A673 (cell line): ENCODE measurements at regions of chr1 and their contacts with region 1.

Region 1: GRCh38 chr1:210292231-210292871 is 36.4 kb upstream of the HHAT start:
- DNase-seq: no peak
- H3K4me3 ChIP-seq: peak overlapping the region; percentile 47
- H3K27ac ChIP-seq: peak overlapping the region; percentile 94
- H3K4me1 ChIP-seq: peaks cover 58% of the 10 kb centered on the region
- H3K27me3 ChIP-seq: no peaks in the 10 kb centered on the region
- CTCF ChIP-seq: peak; percentile 38

Region 2: GRCh38 chr1:210200124-210200736 is 92.1 kb before region 1 on chr1:
- CTCF ChIA-PET with region 1: interaction called, 26 read pairs
- POLR2A ChIA-PET with region 1: interaction called, 3 read pairs
- intact Hi-C with region 1: no loop called
- DNase-seq: peak; percentile 33
- H3K4me3 ChIP-seq: no peak overlapping the region
- H3K27ac ChIP-seq: no peak overlapping the region
- H3K4me1 ChIP-seq: peaks cover 19% of the 10 kb centered on the region
- H3K27me3 ChIP-seq: peaks cover 30% of the 10 kb centered on the region
- CTCF ChIP-seq: peak; percentile 34; the same call in 1 of the 2 replicates

Region 3: GRCh38 chr1:210239349-210240111 is 52.8 kb before region 1 on chr1:
- CTCF ChIA-PET with region 1: no interaction called
- POLR2A ChIA-PET with region 1: interaction called, 3 read pairs
- intact Hi-C with region 1: loop called (anchors 5 kb)
- DNase-seq: peak; percentile 61
- H3K4me3 ChIP-seq: no peak overlapping the region
- H3K27ac ChIP-seq: no peak overlapping the region
- H3K4me1 ChIP-seq: peaks cover 48% of the 10 kb centered on the region
- H3K27me3 ChIP-seq: peaks cover 3% of the 10 kb centered on the region
- CTCF ChIP-seq: peak; percentile 61

Region 4: GRCh38 chr1:210250998-210251679 is 41.2 kb before region 1 on chr1:
- CTCF ChIA-PET with region 1: interaction called, 14 read pairs
- POLR2A ChIA-PET with region 1: no interaction called
- intact Hi-C with region 1: loop called (anchors 5 kb)
- DNase-seq: peak; percentile 91
- H3K4me3 ChIP-seq: peak overlapping the region; percentile 42
- H3K27ac ChIP-seq: peak overlapping the region; percentile 51
- H3K4me1 ChIP-seq: peaks cover 42% of the 10 kb centered on the region
- H3K27me3 ChIP-seq: no peaks in the 10 kb centered on the region
- CTCF ChIP-seq: no peak

Region 5: GRCh38 chr1:211501711-211502400 is 1209.5 kb after region 1 on chr1:
- CTCF ChIA-PET with region 1: no interaction called
- POLR2A ChIA-PET with region 1: no interaction called
- intact Hi-C with region 1: no loop called
- DNase-seq: no peak
- H3K4me3 ChIP-seq: no peak overlapping the region
- H3K27ac ChIP-seq: no peak overlapping the region
- H3K4me1 ChIP-seq: no peaks in the 10 kb centered on the region
- H3K27me3 ChIP-seq: no peaks in the 10 kb centered on the region
- CTCF ChIP-seq: no peak